Right ventricle myocardium superior (tissue), 1 donor: ENCODE measurements at regions of chr11 and their contacts with region 1.

Region 1: GRCh38 chr11:61477727-61478148 is 30.8 kb upstream of the LRRC10B start:
- DNase-seq: peak; percentile 77
- ATAC-seq: peak; percentile 53

Region 2: GRCh38 chr11:61516675-61517572 is 39.2 kb after region 1 on chr11:
- intact Hi-C with region 1: loop called (anchors 5 kb)
- DNase-seq: no peak
- ATAC-seq: peak; percentile 61

Region 3: DNA sequence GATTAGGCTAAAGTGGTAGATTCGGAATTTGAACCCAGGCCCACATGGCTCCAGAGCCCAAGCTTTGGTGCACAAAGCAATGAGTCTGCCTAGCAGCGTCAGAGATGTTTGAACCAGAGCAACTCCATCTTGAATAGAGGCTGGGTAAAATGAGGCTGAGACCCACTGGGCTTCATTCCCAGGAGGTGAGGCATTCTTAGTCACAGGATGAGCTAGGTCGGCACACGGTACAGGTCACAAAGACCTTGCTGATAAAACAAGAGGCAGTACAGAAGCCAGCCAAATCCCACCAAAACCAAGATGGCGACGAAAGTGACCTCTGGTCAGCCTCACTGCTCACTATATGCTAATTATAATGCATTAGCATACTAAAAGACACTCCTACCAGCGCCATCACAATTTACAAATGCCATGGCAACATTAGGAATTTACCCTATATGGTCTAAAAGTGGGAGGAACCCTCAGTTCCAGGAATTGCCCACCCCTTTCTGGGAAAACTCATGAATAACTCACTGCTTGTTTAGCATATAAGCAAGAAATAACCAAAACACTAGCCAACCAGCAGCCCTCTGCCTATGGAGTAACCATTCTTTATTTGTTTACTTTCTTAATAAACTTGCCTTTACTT is 162.2 kb after region 1 on chr11:
- intact Hi-C with region 1: loop called (anchors 5 kb)
- DNase-seq: no peak
- ATAC-seq: no peak